ENCODE measurements at regions of chr2 and their contacts with region 1.

Region 1: GRCh38 chr2:5561006-5561405 is 131.2 kb upstream of the SOX11 start:
- DNase-seq: no peak
- H3K4me3 ChIP-seq: no peak overlapping the region
- H3K27ac ChIP-seq: no peak overlapping the region
- H3K4me1 ChIP-seq: no peaks in the 10 kb centered on the region
- CTCF ChIP-seq: no peak

Region 2: DNA sequence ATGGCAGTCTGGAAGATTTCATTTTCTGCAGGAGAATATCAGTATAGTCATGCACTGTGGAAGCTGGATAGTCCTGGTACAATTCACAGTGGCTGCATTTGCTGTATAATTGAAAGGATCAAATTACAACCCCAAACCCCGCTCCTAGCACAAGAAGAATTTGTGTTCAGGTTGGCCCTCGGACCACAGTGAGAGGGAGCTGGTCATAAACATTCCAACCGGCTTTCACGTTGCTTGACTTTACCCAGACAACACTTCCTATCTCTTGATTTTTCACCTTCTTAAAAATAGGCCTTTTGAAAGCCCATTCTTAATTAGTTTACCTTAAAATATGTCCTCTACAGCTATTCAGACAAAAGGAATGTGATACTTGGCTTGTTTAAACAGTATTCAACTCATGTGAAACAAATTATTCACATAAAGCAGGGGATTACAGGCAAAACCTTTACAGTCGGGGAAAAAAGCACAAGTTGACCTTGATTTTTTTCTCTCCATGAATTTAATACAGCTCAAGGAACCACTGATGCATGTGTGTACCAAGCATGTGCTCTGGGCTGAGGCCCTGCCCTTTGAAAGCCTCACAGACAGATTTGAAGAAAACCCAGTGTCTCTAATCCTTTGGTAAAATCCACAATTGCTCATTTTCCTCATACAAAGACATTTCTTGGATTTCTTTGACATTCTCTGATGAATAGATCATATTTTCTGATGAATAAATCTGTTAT is 11.9 kb before region 1 on chr2:
- CTCF ChIA-PET with region 1: no interaction called
- POLR2A ChIA-PET with region 1: interaction called, 10 read pairs
- intact Hi-C with region 1: no loop called
- DNase-seq: no peak
- H3K4me3 ChIP-seq: no peak overlapping the region
- H3K27ac ChIP-seq: no peak overlapping the region
- H3K4me1 ChIP-seq: no peaks in the 10 kb centered on the region
- CTCF ChIP-seq: no peak

Region 3: DNA sequence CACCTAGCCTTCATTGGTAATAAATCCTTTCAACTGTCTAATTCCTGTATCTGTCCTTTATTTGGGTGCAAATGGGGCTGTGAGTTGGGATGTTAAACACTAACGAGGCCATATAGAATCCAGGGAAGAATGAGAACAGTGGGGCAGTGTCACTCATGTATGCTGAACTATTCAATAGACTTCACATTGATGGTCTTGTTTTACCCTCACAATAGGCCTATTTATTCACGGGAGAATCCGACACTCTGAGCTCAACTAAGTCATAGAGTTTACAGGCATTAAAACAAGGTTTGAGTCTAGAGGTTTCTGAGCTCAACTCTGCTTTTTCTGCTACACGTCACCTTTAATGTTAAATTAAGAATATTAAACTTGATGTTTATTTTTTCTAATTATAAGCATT is 552.8 kb after region 1 on chr2:
- CTCF ChIA-PET with region 1: no interaction called
- POLR2A ChIA-PET with region 1: no interaction called
- intact Hi-C with region 1: no loop called
- DNase-seq: no peak
- H3K4me3 ChIP-seq: no peak overlapping the region
- H3K27ac ChIP-seq: no peak overlapping the region
- H3K4me1 ChIP-seq: no peaks in the 10 kb centered on the region
- CTCF ChIP-seq: no peak